ENCODE measurements at regions of chr9 and their contacts with region 1.

Region 1: DNA sequence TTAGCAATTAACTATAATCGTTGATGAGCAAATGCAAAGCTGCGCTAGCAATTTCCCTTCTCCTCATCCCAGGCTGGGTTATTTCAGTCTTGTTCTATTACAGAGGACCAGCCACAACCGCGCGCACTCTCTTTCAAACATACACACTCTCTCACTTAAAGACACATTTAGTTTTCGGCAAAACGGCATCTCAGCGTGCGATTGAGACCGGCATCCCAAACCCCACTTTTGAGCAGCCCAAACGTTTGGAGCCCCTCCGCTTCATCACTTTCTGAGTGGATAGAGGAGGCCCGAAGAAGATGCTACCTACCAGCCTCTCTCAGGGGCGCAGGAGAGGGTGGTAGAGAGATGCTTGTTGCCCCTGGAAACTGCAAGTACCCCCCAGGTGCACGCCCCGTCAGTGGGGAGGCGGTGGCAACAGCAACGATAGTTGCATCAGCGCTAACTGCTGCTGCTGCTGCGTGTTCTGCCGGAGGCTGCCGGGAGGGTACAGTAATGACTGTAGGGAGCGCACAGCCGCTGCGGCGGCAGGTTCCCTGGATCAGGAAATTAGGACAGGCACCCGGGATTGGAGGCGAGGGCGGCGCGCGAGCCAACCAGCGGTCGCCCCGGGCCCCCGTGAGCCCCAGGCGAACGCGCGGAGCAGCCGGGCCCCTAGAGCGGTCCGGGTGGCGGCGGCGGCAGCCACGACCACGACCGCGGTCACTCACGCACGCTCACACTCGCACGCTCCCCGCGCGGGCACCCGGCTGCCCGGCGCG is 488 bp upstream of the VLDLR start:
- DNase-seq: peak; percentile 58
- H3K4me3 ChIP-seq: peak overlapping the region; percentile 2 to 42 (median 42)
- H3K27ac ChIP-seq: no peak overlapping the region
- H3K4me1 ChIP-seq: peaks cover 13% of the 10 kb centered on the region
- H3K27me3 ChIP-seq: peaks cover 38 to 57% of the 10 kb centered on the region in 2 experiments
- CTCF ChIP-seq: no peak
- POLR2A ChIP-seq: no peak

Region 2: GRCh38 chr9:1495282-1496030 is 1125.6 kb before region 1 on chr9:
- CTCF ChIA-PET with region 1: no interaction called
- POLR2A ChIA-PET with region 1: no interaction called
- dilution Hi-C with region 1: no loop called
- intact Hi-C with region 1: no loop called
- DNase-seq: no peak
- H3K4me3 ChIP-seq: no peak overlapping the region
- H3K27ac ChIP-seq: no peak overlapping the region
- H3K4me1 ChIP-seq: no peaks in the 10 kb centered on the region
- H3K27me3 ChIP-seq: no peaks in the 10 kb centered on the region
- CTCF ChIP-seq: no peak
- POLR2A ChIP-seq: no peak

Region 3: GRCh38 chr9:2597483-2597882 is 23.6 kb before region 1 on chr9:
- CTCF ChIA-PET with region 1: no interaction called
- POLR2A ChIA-PET with region 1: no interaction called
- dilution Hi-C with region 1: no loop called
- intact Hi-C with region 1: no loop called
- DNase-seq: no peak
- H3K4me3 ChIP-seq: no peak overlapping the region
- H3K27ac ChIP-seq: no peak overlapping the region
- H3K4me1 ChIP-seq: no peaks in the 10 kb centered on the region
- H3K27me3 ChIP-seq: peaks cover 2% of the 10 kb centered on the region in 2 experiments
- CTCF ChIP-seq: no peak
- POLR2A ChIP-seq: no peak

Region 4: DNA sequence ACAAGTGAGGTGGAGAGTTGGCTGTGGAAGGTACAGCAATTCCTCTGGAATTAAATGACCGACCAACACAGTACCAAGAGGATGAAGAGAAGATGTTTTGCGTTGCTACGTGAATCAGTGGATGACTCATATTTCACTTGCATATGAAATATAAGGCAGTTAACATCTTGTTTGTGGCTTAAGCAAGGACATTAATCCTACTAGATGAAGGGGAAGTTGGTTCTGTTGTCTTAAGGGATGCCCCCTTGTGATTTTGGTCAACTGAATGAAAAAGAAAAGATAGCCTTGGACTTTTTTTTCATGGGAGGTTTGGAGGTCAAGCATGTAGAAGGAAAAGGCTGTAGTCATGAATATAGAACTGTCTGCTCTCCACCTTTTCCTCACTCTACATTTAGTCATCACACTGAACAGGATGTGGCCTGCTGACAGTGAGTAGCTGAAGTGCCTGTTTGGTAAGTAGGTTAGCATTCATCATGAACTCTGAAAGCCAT is 34.4 kb after region 1 on chr9:
- CTCF ChIA-PET with region 1: no interaction called
- POLR2A ChIA-PET with region 1: no interaction called
- dilution Hi-C with region 1: no loop called
- intact Hi-C with region 1: loop called (anchors 2 kb)
- DNase-seq: peak; percentile 77
- H3K4me3 ChIP-seq: no peak overlapping the region
- H3K27ac ChIP-seq: peak overlapping the region; percentile 52
- H3K4me1 ChIP-seq: peaks cover 12% of the 10 kb centered on the region
- H3K27me3 ChIP-seq: no peaks in the 10 kb centered on the region
- CTCF ChIP-seq: no peak
- POLR2A ChIP-seq: no peak

Region 5: GRCh38 chr9:2691626-2692025 is 70.5 kb after region 1 on chr9:
- CTCF ChIA-PET with region 1: no interaction called
- POLR2A ChIA-PET with region 1: no interaction called
- dilution Hi-C with region 1: no loop called
- intact Hi-C with region 1: loop called (anchors 1 kb)
- DNase-seq: peak; percentile 88
- H3K4me3 ChIP-seq: no peak overlapping the region
- H3K27ac ChIP-seq: peak overlapping the region; percentile 35
- H3K4me1 ChIP-seq: peaks cover 23% of the 10 kb centered on the region
- H3K27me3 ChIP-seq: no peaks in the 10 kb centered on the region
- CTCF ChIP-seq: no peak
- POLR2A ChIP-seq: no peak

Region 6: DNA sequence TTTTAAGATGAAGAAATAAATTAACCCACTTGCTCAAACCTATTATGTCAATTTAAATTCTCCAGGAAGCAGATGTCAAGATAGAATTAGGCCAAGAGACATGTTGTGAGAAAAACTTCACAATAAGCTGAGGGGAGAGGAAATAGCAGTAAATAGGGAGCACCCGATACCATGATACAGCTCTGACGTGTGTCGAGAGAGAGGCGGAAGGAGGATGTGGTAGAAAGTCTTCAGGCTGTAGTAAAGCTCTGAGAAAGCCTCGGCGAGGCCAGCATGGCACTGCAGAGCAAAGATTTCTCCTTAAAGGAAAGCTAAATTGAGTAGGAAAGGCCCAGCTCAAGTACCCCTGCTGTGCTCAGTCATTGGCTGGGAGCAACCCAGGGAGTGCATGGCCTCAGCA is 228.8 kb after region 1 on chr9:
- CTCF ChIA-PET with region 1: no interaction called
- POLR2A ChIA-PET with region 1: no interaction called
- dilution Hi-C with region 1: no loop called
- intact Hi-C with region 1: loop called (anchors 2 kb)
- DNase-seq: no peak
- H3K4me3 ChIP-seq: no peak overlapping the region
- H3K27ac ChIP-seq: no peak overlapping the region
- H3K4me1 ChIP-seq: peaks cover 6% of the 10 kb centered on the region
- H3K27me3 ChIP-seq: peaks cover 0 to 3% of the 10 kb centered on the region in 2 experiments
- CTCF ChIP-seq: no peak
- POLR2A ChIP-seq: no peak